Gastrocnemius medialis (tissue), 4 donors: ENCODE measurements at regions of chr16 and their contacts with region 1.

Region 1: DNA sequence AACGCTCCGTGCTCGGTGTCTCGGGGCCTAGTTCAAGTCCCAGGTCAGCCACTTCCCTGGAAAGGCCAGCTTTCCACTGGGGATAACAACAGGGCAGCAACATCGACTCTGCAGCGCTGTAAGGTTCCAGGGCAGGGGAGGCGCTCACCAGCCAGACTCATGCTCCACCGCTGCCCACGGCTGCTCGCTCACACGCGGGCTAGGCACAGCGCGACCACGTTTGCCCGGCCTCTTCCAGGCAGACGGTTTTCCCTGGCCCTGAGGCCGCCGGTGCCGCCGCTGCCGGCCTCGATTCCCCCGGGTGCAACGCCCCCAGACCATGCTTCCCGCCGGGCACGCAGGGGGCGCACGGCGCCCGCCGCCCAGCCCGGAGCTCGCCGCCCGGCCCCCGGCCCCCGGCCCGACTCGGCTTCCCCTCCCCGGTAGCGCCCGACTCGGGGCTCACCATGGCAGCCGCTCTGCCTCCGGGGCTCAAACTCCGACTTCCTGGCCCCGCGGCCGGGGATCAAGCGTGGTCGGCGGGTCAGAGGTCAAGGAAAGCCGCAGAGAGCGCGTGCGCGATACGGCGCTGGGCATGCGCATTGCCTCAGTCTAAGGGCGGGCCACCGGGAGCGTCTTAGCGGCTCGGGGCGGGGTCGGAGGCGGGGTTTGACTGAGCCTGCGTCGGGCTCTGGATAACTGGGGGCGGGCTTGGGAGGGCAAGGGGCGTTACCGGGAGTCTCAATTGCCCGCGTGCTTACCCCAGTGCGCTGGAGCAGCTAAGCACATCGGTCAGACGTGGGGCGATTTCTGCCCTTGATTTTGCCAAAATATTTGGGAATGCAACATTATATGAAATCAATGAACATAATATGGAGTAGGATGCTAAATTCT is at the start of gene PAM16:
- DNase-seq: peak; percentile 92 to 93
- ATAC-seq: peak; percentile 85
- H3K4me3 ChIP-seq: peak within 1 kb of the TSS; percentile 79 to 93 (median 86)
- H3K27ac ChIP-seq: peak within 1 kb of the TSS; percentile 85 to 97 (median 89)
- H3K4me1 ChIP-seq: peaks cover 30 to 41% of the 10 kb centered on the region in 2 donors
- H3K27me3 ChIP-seq: no peaks in the 10 kb centered on the region
- CTCF ChIP-seq: peak in 1 of 5 experiments; percentile 15
- POLR2A ChIP-seq: peak; percentile 66 to 81
- total RNA-seq, gene PAM16: 112 to 174 (median 132) TPM

Region 2: DNA sequence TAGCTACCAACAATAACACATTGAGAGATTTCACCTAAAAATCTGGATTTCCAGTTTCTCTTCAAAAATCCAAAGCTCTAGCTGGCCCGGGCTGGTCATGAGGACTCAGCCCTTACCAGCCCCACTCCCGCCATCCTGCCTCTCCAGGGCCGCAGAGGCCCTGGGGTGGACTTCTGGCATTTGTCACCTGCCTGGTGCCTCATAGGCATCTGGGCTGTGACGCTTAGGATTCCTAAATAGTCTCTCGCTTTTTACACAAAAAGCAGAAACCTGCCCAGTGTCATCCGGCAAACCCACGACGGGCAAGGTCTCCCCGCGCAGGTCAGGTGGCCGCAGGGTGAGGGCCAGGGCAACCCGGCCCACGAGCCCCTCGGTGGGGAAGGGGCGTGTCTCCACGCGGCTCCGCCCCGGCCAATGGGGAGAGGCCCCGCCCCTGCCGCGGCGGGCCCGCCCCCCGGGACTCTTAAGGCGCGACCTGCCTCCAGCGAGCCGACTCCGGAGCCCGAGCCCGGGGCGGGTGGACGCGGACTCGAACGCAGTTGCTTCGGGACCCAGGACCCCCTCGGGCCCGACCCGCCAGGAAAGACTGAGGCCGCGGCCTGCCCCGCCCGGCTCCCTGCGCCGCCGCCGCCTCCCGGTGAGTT is 20.5 kb after region 1 on chr16 and contains the start of gene VASN:
- in situ Hi-C with region 1: no loop called
- intact Hi-C with region 1: loop called (anchors 2 kb)
- DNase-seq: peak; percentile 63 to 73
- ATAC-seq: peak; percentile 75 to 79
- H3K4me3 ChIP-seq: peak within 1 kb of the TSS; percentile 39 to 65 (median 55)
- H3K27ac ChIP-seq: peak within 1 kb of the TSS; percentile 73 to 84 (median 82)
- H3K4me1 ChIP-seq: peaks cover 20 to 26% of the 10 kb centered on the region in 2 donors
- H3K27me3 ChIP-seq: no peaks in the 10 kb centered on the region
- CTCF ChIP-seq: no peak
- POLR2A ChIP-seq: peak; percentile 93 to 95
- total RNA-seq, gene VASN: 2.4 to 12.8 (median 3.7) TPM

Region 3: DNA sequence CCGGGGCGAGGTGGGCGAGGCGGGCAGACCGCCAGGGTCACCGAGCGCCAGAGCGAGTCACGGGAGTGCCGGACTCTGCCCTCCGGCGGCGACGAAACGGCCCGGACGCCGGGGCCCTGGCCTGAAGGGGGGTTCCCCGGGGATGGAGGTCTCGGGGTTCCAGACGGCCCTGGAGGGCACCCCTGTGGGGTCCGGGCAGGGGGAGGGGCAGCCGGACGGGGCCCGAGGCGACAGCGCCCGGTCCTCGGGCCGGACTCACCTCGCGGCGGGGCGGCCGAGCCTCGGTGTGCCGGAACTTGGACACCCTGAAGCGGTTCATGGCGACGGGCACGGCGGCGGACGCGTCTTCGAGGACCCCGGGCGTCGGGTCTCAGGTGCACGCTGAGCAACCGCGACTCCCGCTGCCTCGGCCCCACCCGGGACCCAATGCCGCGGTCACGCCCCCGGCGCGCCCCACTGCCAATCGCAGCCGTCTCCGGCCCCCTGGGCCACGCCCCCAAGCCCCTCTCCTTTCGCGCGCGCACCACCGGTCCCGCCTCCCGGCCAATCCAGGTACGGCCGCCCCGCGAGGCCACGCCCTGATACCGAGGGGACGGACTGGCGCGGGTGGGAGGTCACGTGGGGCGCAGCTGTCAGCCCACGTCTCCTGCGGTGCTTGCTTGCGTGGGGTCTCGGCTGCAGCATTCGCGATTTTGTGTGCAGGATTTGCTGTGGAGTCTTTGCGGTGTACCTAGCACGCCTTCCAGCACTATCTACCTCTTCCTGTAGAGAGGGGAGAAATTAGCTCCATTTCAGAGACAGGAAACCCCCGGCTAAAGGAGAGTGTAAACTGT is 65.4 kb after region 1 on chr16 and contains the start of gene CORO7:
- in situ Hi-C with region 1: loop called in 2 of 4 experiments (anchors 10 kb)
- intact Hi-C with region 1: loop called (anchors 5 kb)
- DNase-seq: peak; percentile 93 to 96
- ATAC-seq: peak; percentile 90 to 93
- H3K4me3 ChIP-seq: peak within 1 kb of the TSS; percentile 65 to 92 (median 78)
- H3K27ac ChIP-seq: peak within 1 kb of the TSS; percentile 61 to 71 (median 65)
- H3K4me1 ChIP-seq: peaks cover 3 to 9% of the 10 kb centered on the region in 2 donors
- H3K27me3 ChIP-seq: no peaks in the 10 kb centered on the region
- CTCF ChIP-seq: peak in 2 of 5 experiments; percentile 18 to 30
- POLR2A ChIP-seq: peak; percentile 73 to 79
- total RNA-seq, gene CORO7: 5.7 to 15.3 (median 7.2) TPM